Activated CD4-positive, alpha-beta memory T cell treated with anti-CD3 and anti-CD28 coated beads for 36 hours (primary cell): ENCODE measurements at regions of chr1 and their contacts with region 1.

Region 1: GRCh38 chr1:202852163-202852904 is 36.6 kb downstream of the RABIF start:
- DNase-seq: peak; percentile 70
- H3K4me3 Mint-ChIP-seq: no peak overlapping the region
- H3K27ac Mint-ChIP-seq: no peak overlapping the region
- H3K4me1 Mint-ChIP-seq: peaks cover 9% of the 10 kb centered on the region
- H3K27me3 Mint-ChIP-seq: no peaks in the 10 kb centered on the region

Region 2: GRCh38 chr1:202599677-202600431 is 252.5 kb before region 1 on chr1:
- CTCF ChIA-PET with region 1: no interaction called
- POLR2A ChIA-PET with region 1: no interaction called
- intact Hi-C with region 1: no loop called
- DNase-seq: peak; percentile 60
- H3K4me3 Mint-ChIP-seq: no peak overlapping the region
- H3K27ac Mint-ChIP-seq: no peak overlapping the region
- H3K4me1 Mint-ChIP-seq: no peaks in the 10 kb centered on the region
- H3K27me3 Mint-ChIP-seq: no peaks in the 10 kb centered on the region

Region 3: DNA sequence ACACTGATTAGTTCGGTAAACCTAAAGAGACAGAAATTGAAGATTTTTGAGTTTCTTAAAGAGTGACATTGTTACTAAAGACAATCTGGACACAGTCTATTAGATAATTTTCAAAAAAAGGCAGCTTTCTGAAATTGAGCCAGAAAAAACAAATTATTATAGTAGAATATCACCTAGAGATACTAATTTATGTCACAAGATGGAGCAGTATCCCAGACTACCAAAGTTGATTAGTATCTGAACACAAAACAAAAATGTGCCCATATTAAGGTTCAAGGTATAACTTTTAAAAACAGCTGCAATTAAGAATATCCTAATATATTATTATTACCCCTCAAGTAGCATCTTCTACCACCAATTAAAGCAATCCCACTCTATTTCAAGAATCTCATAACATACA is 101.6 kb before region 1 on chr1:
- CTCF ChIA-PET with region 1: interaction called, 6 read pairs
- POLR2A ChIA-PET with region 1: no interaction called
- intact Hi-C with region 1: loop called (anchors 5 kb)
- DNase-seq: no peak
- H3K4me3 Mint-ChIP-seq: no peak overlapping the region
- H3K27ac Mint-ChIP-seq: no peak overlapping the region
- H3K4me1 Mint-ChIP-seq: no peaks in the 10 kb centered on the region
- H3K27me3 Mint-ChIP-seq: no peaks in the 10 kb centered on the region